GM23248 (cell line): ENCODE measurements at regions of chr5 and their contacts with region 1.

Region 1: GRCh38 chr5:147558826-147559225 is 49.0 kb upstream of the DPYSL3 start:
- DNase-seq: peak; percentile 87
- H3K4me3 ChIP-seq: no peak overlapping the region
- H3K27ac ChIP-seq: no peak overlapping the region
- H3K4me1 ChIP-seq: peaks cover 15% of the 10 kb centered on the region
- H3K27me3 ChIP-seq: 0 out of 2 replicates have a peak, but pooled peaks cover 4% of the 10 kb centered on the region

Region 2: GRCh38 chr5:146533260-146533857 is 1025.5 kb before region 1 on chr5:
- in situ Hi-C with region 1: loop called (anchors 25 kb)
- DNase-seq: peak; percentile 74
- H3K4me3 ChIP-seq: no peak overlapping the region
- H3K27ac ChIP-seq: no peak overlapping the region
- H3K4me1 ChIP-seq: no peaks in the 10 kb centered on the region
- H3K27me3 ChIP-seq: 0 out of 2 replicates have a peak, but pooled peaks cover under 1% of the 10 kb centered on the region

Region 3: GRCh38 chr5:147391781-147392180 is 167.0 kb before region 1 on chr5:
- in situ Hi-C with region 1: loop called (anchors 10 kb)
- DNase-seq: peak; percentile 94
- H3K4me3 ChIP-seq: no peak overlapping the region
- H3K27ac ChIP-seq: no peak overlapping the region
- H3K4me1 ChIP-seq: no peaks in the 10 kb centered on the region
- H3K27me3 ChIP-seq: no peaks in the 10 kb centered on the region

Region 4: DNA sequence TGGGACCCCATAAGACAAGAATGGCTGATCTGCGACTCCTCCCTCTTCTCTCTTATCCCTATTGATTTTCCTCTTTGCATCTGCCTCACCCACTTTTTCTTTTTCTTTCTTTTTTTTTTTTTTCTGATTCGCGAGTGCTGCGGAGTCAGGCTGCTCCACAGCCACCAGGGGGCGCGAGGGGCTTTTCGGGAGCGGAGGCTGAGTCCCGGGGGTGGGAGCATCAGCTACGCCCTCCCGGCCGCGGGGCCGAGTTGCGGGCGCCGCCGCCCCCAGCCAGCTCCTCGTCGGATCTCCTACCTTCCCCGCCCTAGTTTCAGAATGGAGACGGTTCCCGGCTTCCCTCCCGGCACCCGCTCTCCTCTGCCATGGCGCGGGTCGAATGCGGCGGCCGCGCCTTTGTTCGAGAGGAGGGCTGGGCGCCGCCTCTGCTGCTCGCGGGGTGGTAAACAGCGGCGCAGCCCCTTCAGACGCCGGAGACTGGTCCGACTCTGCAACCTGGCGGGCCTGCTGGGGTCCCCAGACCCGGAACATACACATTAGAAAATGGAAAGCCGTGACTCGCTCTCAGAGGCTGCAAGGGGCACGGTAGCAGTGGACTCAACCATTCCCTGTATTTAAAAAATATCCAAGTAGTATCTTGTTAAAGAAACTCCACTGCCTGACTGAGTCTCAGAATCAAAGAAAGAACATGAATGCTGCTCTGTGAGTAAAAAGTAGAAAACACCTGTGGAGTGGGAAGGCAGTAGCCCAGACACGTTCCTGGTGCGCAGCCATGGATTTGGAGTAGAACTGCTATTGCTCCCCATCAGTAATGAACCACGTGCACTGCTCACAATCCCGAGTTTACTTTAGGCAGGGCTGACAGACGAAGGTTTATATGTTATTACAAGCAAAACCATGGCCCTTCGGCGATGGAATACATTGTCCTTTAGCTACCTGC is 104.7 kb before region 1 on chr5:
- in situ Hi-C with region 1: loop called (anchors 5 kb)
- DNase-seq: peak; percentile 94
- H3K4me3 ChIP-seq: peak overlapping the region; percentile 82
- H3K27ac ChIP-seq: peak overlapping the region; percentile 65
- H3K4me1 ChIP-seq: peaks cover 23% of the 10 kb centered on the region
- H3K27me3 ChIP-seq: no peaks in the 10 kb centered on the region